ENCODE measurements at regions of chr20 and their contacts with region 1.

Region 1: GRCh38 chr20:7113577-7114466 is 346.3 kb downstream of the BMP2 start:
- DNase-seq: peak in 5 of 10 donors; percentile 28 to 43 (median 38)
- H3K4me3 ChIP-seq: no peak overlapping the region
- H3K27ac ChIP-seq: no peak overlapping the region
- H3K27me3 ChIP-seq: no peaks in the 10 kb centered on the region
- CTCF ChIP-seq: peak in 53 of 56 donors; percentile 20 to 72 (median 50)

Region 2: DNA sequence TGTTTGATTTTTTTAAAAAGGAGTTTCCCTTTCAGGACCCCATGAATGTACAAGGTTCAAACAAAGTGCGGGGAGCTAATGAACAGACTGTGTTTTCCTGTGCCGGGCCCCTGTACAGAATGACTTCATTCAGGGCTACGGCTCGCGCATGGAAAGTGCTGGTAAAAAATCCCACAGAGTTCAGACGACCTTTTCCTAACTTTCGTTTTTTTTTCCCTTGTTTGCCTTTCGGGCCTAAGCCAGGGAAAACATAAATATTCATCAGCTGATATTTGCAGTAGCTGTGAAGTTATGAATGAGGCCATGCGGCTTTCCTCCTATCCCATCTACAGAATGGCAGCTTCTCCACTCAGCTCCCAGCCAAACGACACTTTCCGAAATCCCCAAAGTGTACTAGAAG is 752.5 kb after region 1 on chr20:
- intact Hi-C with region 1: loop called in 1 of 2 experiments (anchors 10 kb)
- DNase-seq: no peak
- H3K4me3 ChIP-seq: peak overlapping the region in 22 of 59 donors; percentile 3 to 37 (median 17)
- H3K27ac ChIP-seq: no peak overlapping the region
- H3K27me3 ChIP-seq: no peaks in the 10 kb centered on the region
- CTCF ChIP-seq: no peak

Measured in dorsolateral prefrontal cortex (tissue), 120 donors.